Activated CD4-positive, alpha-beta T cell treated with anti-CD3 and anti-CD28 coated beads for 36 hours (primary cell): ENCODE measurements at regions of chr17 and their contacts with region 1.

Region 1: DNA sequence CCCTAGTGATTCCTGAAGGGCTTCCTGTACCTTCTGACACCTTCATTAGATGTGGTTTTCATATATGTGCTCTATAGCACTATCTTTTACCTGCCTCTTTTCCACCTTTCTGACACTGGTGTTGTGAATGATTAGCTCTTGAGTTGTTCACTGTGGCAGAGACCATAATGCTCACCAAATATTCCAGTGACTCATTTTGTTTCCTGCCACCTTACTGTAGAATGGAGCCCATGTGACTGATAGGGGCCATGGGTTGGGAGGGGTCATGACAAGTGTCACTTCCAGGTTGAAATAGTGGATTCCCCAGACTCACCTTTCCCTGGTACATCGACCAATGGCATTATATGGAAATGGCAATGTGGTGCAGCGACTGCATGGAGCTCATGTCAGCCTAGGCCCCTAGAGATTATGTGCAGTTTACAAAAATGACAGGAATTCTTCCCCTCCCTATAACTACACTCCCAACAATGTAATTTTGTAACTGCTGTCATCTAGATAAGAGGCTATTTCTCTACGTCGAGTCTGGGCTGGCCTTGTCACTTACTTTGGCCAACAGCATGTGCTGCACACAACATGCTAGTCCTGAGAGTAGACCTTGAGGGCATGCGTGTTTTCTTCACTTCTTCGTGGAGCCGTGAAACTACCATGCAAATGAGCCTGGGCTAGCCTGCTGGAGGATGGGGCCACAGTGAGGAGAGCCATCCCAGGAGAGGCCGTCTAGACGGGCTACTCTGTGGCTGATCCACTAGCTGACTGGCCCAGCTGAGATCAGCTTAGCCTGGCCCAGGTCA is 409.6 kb downstream of the CA10 start:
- DNase-seq: peak; percentile 6
- ATAC-seq: peak; percentile 78
- H3K4me3 Mint-ChIP-seq: no peak overlapping the region
- H3K27ac Mint-ChIP-seq: no peak overlapping the region
- H3K4me1 Mint-ChIP-seq: peaks cover 3% of the 10 kb centered on the region
- H3K27me3 Mint-ChIP-seq: no peaks in the 10 kb centered on the region

Region 2: GRCh38 chr17:51699297-51699696 is 49.6 kb before region 1 on chr17:
- CTCF ChIA-PET with region 1: no interaction called
- POLR2A ChIA-PET with region 1: no interaction called
- intact Hi-C with region 1: loop called in 1 of 2 experiments (anchors 10 kb)
- DNase-seq: no peak
- ATAC-seq: no peak
- H3K4me3 Mint-ChIP-seq: no peak overlapping the region
- H3K27ac Mint-ChIP-seq: no peak overlapping the region
- H3K4me1 Mint-ChIP-seq: no peaks in the 10 kb centered on the region
- H3K27me3 Mint-ChIP-seq: peaks cover 25% of the 10 kb centered on the region

Region 3: DNA sequence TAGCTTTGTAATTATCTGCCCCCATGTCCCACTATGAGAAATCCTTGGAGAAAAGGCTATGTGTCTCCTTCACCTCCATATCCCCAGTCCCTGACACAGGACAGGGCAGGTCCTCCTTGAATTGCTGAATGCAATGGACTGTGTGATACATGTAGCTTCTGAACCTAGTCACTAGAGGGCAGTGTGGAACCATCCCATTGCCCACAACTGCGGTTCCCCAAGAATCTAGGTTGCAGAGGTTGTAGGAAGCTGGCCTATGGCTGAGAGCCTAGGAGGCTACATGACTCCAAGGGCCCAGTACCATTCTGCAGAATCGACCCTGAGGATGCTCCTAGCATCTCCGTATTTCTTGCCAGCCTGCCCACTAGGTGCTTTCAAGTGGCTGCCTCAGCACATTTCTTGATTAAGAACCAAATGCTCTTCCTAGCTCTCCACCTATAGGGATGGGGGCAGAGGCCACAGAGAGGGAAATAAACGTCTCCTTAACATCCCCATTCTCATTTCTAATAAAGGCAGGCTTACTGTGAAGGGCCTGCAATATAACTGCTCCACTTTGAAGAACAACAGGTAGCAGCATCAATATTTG is 15.5 kb after region 1 on chr17:
- CTCF ChIA-PET with region 1: interaction called, 13 read pairs
- POLR2A ChIA-PET with region 1: no interaction called
- intact Hi-C with region 1: no loop called
- DNase-seq: peak; percentile 66
- ATAC-seq: peak; percentile 89
- H3K4me3 Mint-ChIP-seq: no peak overlapping the region
- H3K27ac Mint-ChIP-seq: no peak overlapping the region
- H3K4me1 Mint-ChIP-seq: no peaks in the 10 kb centered on the region
- H3K27me3 Mint-ChIP-seq: peaks cover 19% of the 10 kb centered on the region